CD14-positive monocyte (primary cell): ENCODE measurements at regions of chr20 and their contacts with region 1.

Region 1: DNA sequence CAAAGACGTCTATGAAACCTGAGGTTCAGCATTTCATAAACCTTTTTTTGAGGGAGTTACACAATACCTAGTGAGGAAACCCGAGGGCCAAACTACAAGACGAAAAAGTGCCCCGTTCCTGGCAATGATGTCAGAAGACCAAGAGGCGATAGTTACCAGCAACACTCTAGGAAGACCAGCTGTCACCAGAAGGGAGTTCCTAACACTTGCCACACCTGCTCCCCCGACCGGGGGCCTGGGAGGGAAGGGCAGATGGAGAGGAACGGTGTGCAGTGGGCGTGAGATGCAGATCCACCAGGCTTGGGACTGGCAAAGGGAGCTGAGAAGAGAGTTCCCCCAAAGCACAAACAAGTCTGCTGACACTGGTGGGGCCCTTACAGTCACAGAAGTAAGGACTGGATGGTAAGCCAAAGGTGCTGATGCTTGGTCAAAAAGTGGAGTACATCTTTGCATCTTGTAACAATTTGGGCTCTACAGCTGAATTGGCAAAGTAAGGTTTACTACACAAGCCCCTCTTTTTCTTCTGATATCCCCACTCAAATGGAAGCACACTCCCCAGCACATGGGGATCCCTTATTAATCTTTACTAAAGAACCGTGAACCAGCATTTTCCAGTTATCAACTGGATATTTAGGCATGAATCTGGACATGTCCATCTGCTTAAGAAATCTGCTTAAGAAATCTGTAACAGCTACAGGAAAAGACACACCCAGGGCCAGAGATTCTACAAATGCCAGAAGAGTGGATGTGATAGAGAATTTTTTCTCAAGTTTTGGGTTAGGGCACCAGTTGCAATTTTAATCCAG is 38.5 kb downstream of the PANK2 start:
- DNase-seq: peak; percentile 66 to 79 (median 76)
- H3K4me3 ChIP-seq: peak overlapping the region in 1 of 3 experiments; percentile 54
- H3K4me3 Mint-ChIP-seq: peak overlapping the region; percentile 6 to 75
- H3K27ac ChIP-seq: peak overlapping the region; percentile 72 to 84
- H3K27ac Mint-ChIP-seq: peak overlapping the region; percentile 82 to 94 (median 89)
- H3K4me1 ChIP-seq: peaks cover 90 to 97% of the 10 kb centered on the region in 2 donors
- H3K4me1 Mint-ChIP-seq: peaks cover 95% of the 10 kb centered on the region
- H3K27me3 ChIP-seq: no peaks in the 10 kb centered on the region
- H3K27me3 Mint-ChIP-seq: peaks cover 0 to 3% (median 0%) of the 10 kb centered on the region in 3 donors
- CTCF ChIP-seq: no peak

Region 2: DNA sequence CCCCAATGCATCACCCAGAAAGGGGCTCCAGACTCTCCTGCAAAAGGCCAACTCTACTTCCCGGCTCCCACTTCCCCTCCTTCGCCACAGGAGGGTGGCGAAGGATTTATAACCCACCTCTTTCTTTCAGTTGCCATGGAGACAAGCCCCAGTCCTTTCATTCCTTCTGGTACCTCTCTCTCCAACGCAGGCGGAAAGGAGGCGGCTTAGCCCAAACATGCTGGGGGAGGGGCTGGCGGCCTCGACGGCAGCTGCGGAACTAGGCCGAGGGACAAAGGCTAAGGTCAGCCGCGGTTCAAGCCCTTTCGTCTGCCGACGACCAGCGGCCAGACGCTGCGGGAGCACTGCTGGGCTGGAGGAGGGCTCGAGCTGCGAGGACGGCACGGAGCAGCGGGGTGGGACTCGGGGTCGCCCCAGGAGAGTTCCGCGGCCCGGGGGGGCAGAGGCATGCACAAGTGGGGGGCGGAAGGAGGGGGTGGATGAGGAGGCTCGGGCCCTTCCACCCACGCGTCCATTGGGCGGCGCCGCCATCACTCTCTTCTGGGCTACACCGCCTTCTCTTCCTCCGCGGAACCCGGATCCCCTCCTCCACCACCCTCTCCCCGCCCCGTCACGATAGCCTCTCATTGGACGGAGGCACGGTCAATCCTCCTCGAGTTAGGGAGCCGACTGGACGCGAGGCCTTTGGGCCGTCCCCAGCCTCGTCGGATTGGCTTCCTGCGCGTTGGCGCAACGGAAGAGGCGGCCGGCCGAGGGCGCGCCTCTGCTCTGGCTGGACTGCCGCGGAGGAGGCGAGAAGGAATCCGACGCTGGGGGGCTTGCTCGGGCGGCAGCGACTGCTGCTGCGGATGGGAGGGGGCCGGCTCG is 38.8 kb before region 1 on chr20 and contains the start of gene PANK2:
- intact Hi-C with region 1: loop called in 1 of 2 experiments (anchors 5 kb)
- DNase-seq: peak; percentile 95 to 97 (median 96)
- H3K4me3 ChIP-seq: peak within 1 kb of the TSS; percentile 93 to 96 (median 94)
- H3K4me3 Mint-ChIP-seq: peak within 1 kb of the TSS; percentile 95 to 98
- H3K27ac ChIP-seq: peak within 1 kb of the TSS; percentile 77 to 85
- H3K27ac Mint-ChIP-seq: peak within 1 kb of the TSS; percentile 95 to 98 (median 97)
- H3K4me1 ChIP-seq: peaks cover 44 to 49% of the 10 kb centered on the region in 2 donors
- H3K4me1 Mint-ChIP-seq: peaks cover 50% of the 10 kb centered on the region
- H3K27me3 ChIP-seq: no peaks in the 10 kb centered on the region
- H3K27me3 Mint-ChIP-seq: peaks cover 0 to 2% (median 1%) of the 10 kb centered on the region in 3 donors
- CTCF ChIP-seq: no peak
- polyA plus RNA-seq, gene PANK2: 36.8 to 65.7 (median 48.0) TPM

Region 3: DNA sequence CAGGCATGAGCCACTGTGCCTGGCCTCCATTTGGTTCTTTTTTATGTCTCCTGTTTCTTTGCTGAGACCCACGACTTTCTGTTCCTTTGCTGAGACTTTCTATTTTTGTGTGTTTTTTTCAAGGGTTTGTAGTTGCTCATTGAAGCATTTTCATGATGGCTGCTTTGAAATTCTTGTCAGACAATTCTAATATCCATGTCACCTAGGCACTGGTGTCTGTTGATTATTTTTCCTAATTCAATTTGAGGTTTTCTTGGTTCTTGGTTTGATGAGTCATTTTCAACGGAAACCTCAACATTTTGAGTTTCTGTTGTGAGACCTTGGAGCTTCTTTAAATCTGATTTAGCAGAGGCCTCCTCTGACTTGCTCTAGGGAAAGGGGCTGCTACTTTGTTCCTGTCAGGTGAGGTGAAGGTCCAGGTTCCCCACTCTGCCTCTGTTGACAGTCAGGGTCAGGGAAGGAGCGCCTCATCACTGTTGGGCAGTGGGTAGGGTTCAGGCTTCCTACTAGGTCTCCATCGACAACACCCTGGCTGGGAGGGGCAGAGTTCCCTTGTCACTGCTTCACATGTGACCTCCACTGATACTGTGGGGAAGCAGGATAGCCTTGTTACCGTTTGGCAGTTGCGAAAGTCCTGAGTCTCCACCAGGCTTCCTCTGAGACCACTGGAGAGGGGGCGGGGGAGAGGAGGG is 154.9 kb after region 1 on chr20:
- intact Hi-C with region 1: loop called in 1 of 2 experiments (anchors 10 kb)
- DNase-seq: peak; percentile 86 to 96 (median 93)
- H3K4me3 ChIP-seq: peak overlapping the region; percentile 6 to 50 (median 8)
- H3K4me3 Mint-ChIP-seq: peak overlapping the region; percentile 33 to 52
- H3K27ac ChIP-seq: peak overlapping the region; percentile 98 to 99
- H3K27ac Mint-ChIP-seq: peak overlapping the region; percentile 93 to 99 (median 96)
- H3K4me1 ChIP-seq: peaks cover 58 to 60% of the 10 kb centered on the region in 2 donors
- H3K4me1 Mint-ChIP-seq: peaks cover 57% of the 10 kb centered on the region
- H3K27me3 ChIP-seq: no peaks in the 10 kb centered on the region
- H3K27me3 Mint-ChIP-seq: peaks cover 0 to 2% (median 0%) of the 10 kb centered on the region in 3 donors
- CTCF ChIP-seq: no peak

Region 4: DNA sequence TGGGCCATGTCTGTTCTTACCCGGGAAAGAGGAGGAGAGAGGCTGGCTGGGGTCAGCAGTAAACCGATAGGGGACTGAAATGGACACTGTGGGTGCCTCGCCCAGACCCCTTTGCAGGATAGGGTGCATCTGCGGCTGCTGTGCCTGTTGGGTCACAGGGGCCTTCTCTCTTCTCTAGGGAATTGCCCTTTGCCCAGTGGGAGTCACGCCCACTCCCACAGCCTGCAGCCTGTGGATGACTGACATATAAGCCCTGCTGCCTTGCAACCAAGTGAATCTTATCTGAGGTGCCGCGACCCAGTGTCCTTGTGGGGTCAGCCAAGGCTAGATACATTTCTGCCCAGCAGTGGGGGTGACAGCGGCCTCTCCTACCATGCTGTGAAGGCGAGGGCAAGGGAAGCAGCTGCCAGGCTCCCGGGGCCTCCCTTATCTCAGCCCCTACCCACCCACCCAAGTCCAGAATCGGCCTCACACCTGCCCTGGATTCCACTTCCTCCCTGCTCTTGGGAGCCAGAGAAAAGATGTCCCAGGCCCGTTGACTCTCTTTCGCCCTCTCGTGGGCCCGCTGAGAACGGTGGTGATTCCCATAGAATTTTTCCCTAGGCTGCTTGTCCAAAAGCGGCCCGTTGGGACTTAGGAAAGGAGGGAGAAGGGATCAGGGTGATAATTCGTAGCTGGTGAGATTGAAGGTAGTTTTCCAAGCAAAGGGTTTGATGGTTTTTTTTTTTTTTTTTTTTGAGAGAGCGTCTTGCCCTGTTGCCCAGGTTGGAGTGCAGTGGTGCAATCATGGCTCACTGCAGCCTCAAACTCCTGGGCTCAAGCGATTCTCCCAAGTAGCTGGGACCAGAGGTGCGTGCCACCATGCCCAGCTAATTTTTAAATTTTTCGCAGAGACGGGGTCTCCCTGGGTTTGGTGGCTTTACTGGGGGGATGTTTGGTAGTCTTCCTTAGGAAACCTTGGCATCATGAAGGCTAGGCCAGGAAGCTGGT is 164.1 kb after region 1 on chr20:
- intact Hi-C with region 1: loop called (anchors 10 kb)
- DNase-seq: peak in 2 of 3 donors; percentile 57 to 65
- H3K4me3 ChIP-seq: no peak overlapping the region
- H3K4me3 Mint-ChIP-seq: no peak overlapping the region
- H3K27ac ChIP-seq: peak overlapping the region in 1 of 2 donors; percentile 83
- H3K27ac Mint-ChIP-seq: peak overlapping the region; percentile 86 to 98 (median 95)
- H3K4me1 ChIP-seq: peaks cover 36 to 37% of the 10 kb centered on the region in 2 donors
- H3K4me1 Mint-ChIP-seq: peaks cover 37% of the 10 kb centered on the region
- H3K27me3 ChIP-seq: no peaks in the 10 kb centered on the region
- H3K27me3 Mint-ChIP-seq: peaks cover 0 to 3% (median 2%) of the 10 kb centered on the region in 3 donors
- CTCF ChIP-seq: peak; percentile 80